ENCODE measurements at regions of chr12 and their contacts with region 1.

Region 1: GRCh38 chr12:30898846-30899245 is 27.7 kb upstream of the TSPAN11 start:
- DNase-seq: no peak
- H3K4me3 ChIP-seq: no peak overlapping the region
- H3K27ac ChIP-seq: no peak overlapping the region
- H3K4me1 ChIP-seq: no peaks in the 10 kb centered on the region
- H3K27me3 ChIP-seq: no peaks in the 10 kb centered on the region
- CTCF ChIP-seq: no peak
- POLR2A ChIP-seq: no peak

Region 2: GRCh38 chr12:30878024-30878423 is 20.8 kb before region 1 on chr12:
- intact Hi-C with region 1: loop called (anchors 1 kb)
- DNase-seq: no peak
- H3K4me3 ChIP-seq: no peak overlapping the region
- H3K27ac ChIP-seq: no peak overlapping the region
- H3K4me1 ChIP-seq: no peaks in the 10 kb centered on the region
- H3K27me3 ChIP-seq: no peaks in the 10 kb centered on the region
- CTCF ChIP-seq: no peak
- POLR2A ChIP-seq: no peak

Region 3: DNA sequence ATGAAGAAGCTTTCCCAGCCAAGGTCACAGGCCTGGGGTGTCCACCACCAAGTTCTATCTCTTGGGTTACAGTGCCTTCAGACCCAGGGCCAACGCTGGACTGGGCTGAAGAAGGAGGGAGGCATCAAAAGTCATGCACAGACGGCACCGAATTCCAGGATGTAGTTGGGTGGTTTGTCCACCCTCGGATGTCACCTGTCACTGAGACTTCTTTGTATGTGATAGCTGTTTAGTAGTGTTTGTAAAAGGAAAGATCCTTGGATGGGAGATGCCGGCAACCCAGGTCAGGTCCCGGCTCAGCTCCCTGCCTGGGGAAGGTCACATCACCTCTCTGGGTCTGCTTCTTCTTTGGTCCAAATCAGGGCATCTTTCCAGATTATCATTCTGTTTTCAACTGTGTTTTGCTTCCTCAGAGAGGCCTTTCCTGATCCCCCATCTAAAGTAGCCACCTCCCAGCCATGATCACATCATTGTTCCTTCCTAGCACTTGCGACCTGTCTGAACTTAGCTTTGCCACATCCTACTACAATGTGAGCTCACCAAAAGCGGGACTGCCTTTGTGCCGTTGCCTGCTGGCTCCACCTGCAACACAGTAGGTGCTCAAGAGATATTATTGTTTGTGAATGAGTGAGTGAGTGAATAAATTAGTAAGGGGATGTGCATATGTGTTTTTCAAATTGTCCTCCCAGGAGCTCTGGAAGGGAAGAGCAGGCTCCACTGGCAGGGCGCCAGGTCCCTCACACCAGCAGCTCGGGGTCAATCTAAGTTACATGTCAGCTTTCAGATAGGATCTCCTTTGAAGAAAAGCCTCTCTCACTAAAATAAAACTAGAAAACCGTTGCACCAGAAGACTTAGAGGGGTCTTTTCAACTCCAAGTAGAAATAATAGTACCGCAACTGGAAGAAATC is 29.8 kb after region 1 on chr12:
- intact Hi-C with region 1: no loop called
- DNase-seq: no peak
- H3K4me3 ChIP-seq: no peak overlapping the region
- H3K27ac ChIP-seq: no peak overlapping the region
- H3K4me1 ChIP-seq: no peaks in the 10 kb centered on the region
- H3K27me3 ChIP-seq: peaks cover 0 to 8% of the 10 kb centered on the region in 2 donors
- CTCF ChIP-seq: no peak
- POLR2A ChIP-seq: no peak